ENCODE measurements at regions of chr11 and their contacts with region 1.

Region 1: GRCh38 chr11:59135648-59136461 is 6.8 kb upstream of the FAM111A start:
- DNase-seq: peak; percentile 40
- ATAC-seq: peak; percentile 100
- H3K4me3 ChIP-seq: no peak overlapping the region
- H3K27ac ChIP-seq: no peak overlapping the region
- H3K4me1 ChIP-seq: no peaks in the 10 kb centered on the region
- H3K27me3 ChIP-seq: no peaks in the 10 kb centered on the region
- CTCF ChIP-seq: peak; percentile 99 to 100 (median 100); a peak in 5 of 6 replicates
- EP300 ChIP-seq: no peak
- POLR2A ChIP-seq: no peak
- RAD21 ChIP-seq: peak; percentile 99

Region 2: GRCh38 chr11:58654079-58654907 is 481.6 kb before region 1 on chr11:
- CTCF ChIA-PET with region 1: interaction called, 6 read pairs
- POLR2A ChIA-PET with region 1: no interaction called
- RAD21 ChIA-PET with region 1: no interaction called
- SMC1A ChIA-PET with region 1: no interaction called
- in situ Hi-C with region 1: no loop called
- intact Hi-C with region 1: loop called (anchors 1 kb)
- DNase-seq: peak; percentile 38
- ATAC-seq: peak; percentile 98
- H3K4me3 ChIP-seq: no peak overlapping the region
- H3K27ac ChIP-seq: no peak overlapping the region
- H3K4me1 ChIP-seq: peaks cover 4% of the 10 kb centered on the region; the same call in 1 of the 2 replicates
- H3K27me3 ChIP-seq: no peaks in the 10 kb centered on the region
- CTCF ChIP-seq: peak; percentile 89 to 90 (median 89)
- EP300 ChIP-seq: no peak
- POLR2A ChIP-seq: no peak
- RAD21 ChIP-seq: peak; percentile 76

Region 3: GRCh38 chr11:58900479-58901420 is 235.1 kb before region 1 on chr11:
- CTCF ChIA-PET with region 1: no interaction called
- POLR2A ChIA-PET with region 1: no interaction called
- RAD21 ChIA-PET with region 1: interaction called, 5 read pairs
- SMC1A ChIA-PET with region 1: interaction called, 3 read pairs
- in situ Hi-C with region 1: no loop called
- intact Hi-C with region 1: loop called (anchors 5 kb)
- DNase-seq: peak; percentile 16
- ATAC-seq: peak; percentile 90
- H3K4me3 ChIP-seq: no peak overlapping the region
- H3K27ac ChIP-seq: no peak overlapping the region
- H3K4me1 ChIP-seq: no peaks in the 10 kb centered on the region
- H3K27me3 ChIP-seq: peaks cover 1 to 7% of the 10 kb centered on the region in 2 experiments
- CTCF ChIP-seq: peak; percentile 51 to 66 (median 62); a peak in 5 of 6 replicates
- EP300 ChIP-seq: no peak
- POLR2A ChIP-seq: no peak
- RAD21 ChIP-seq: peak; percentile 52; the same call in 1 of the 2 replicates

Region 4: GRCh38 chr11:58928691-58929090 is 207.2 kb before region 1 on chr11:
- CTCF ChIA-PET with region 1: no interaction called
- POLR2A ChIA-PET with region 1: no interaction called
- RAD21 ChIA-PET with region 1: no interaction called
- SMC1A ChIA-PET with region 1: no interaction called
- in situ Hi-C with region 1: no loop called
- intact Hi-C with region 1: no loop called
- DNase-seq: no peak
- ATAC-seq: no peak
- H3K4me3 ChIP-seq: no peak overlapping the region
- H3K27ac ChIP-seq: no peak overlapping the region
- H3K4me1 ChIP-seq: no peaks in the 10 kb centered on the region
- H3K27me3 ChIP-seq: peaks cover 1 to 6% of the 10 kb centered on the region in 2 experiments; a peak in 2 of 4 replicates
- CTCF ChIP-seq: no peak
- EP300 ChIP-seq: no peak
- POLR2A ChIP-seq: no peak
- RAD21 ChIP-seq: no peak

Region 5: GRCh38 chr11:59062602-59063529 is 73.0 kb before region 1 on chr11:
- CTCF ChIA-PET with region 1: interaction called, 30 read pairs
- POLR2A ChIA-PET with region 1: no interaction called
- RAD21 ChIA-PET with region 1: interaction called, 16 read pairs
- SMC1A ChIA-PET with region 1: interaction called, 14 read pairs
- in situ Hi-C with region 1: no loop called
- intact Hi-C with region 1: no loop called
- DNase-seq: no peak
- ATAC-seq: no peak
- H3K4me3 ChIP-seq: no peak overlapping the region
- H3K27ac ChIP-seq: no peak overlapping the region
- H3K4me1 ChIP-seq: peaks cover 6% of the 10 kb centered on the region
- H3K27me3 ChIP-seq: no peaks in the 10 kb centered on the region
- CTCF ChIP-seq: no peak
- EP300 ChIP-seq: no peak
- POLR2A ChIP-seq: no peak
- RAD21 ChIP-seq: no peak

Region 6: DNA sequence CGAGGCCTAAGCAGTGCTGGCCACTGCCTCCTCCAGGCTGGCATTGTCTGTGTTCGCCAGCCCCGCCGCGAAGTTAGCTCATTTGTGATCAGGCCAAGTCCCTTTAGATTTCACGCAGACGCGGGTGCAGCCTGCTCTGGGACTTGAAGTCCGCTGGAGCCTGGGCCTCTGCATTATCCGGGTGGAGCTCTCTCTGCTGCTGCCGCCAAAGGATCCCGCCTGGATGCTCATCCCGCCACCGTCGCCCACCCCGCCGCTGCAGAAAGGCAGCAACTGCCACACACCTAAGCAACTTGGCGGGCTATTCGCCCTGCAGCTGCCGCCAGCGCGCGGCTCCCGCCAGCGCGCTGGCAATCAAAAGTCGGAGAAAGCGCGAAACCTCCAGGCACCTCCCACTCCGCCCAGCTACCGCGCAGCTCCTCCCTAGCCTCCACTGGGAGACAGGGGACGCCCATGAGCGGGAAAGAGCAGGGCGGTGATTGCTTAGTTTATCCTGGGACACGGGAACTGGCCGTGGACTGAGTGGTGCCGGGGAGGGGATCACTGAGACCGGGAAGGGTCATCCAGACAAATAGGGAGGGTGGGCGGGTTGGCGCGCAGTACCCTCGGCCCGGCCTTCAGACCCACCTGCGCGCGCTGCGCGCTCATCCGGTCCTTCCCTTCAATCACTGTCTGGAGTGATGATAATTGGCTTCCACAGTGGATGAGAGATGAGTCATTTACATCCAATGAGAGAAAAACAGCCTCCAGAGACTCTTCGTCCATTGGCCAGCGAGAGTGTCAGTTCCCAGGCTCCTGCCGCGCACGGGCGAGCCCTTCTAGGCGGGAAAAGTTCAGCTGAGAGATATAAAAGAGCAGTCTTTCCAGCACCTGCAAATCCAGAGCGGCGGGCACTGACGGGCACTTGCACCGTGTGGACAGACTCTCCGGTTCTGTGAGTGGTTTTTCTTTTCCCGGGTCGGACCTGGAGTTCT is 29.2 kb before region 1 on chr11 and contains the start of gene FAM111B:
- CTCF ChIA-PET with region 1: interaction called, 49 read pairs
- POLR2A ChIA-PET with region 1: interaction called, 3 read pairs
- RAD21 ChIA-PET with region 1: interaction called, 33 read pairs
- SMC1A ChIA-PET with region 1: interaction called, 28 read pairs
- in situ Hi-C with region 1: loop called (anchors 5 kb)
- intact Hi-C with region 1: loop called (anchors 1 kb)
- DNase-seq: peak; percentile 84
- ATAC-seq: peak; percentile 85
- H3K4me3 ChIP-seq: peak within 1 kb of the TSS; percentile 79
- H3K27ac ChIP-seq: peak within 1 kb of the TSS; percentile 89
- H3K4me1 ChIP-seq: peaks cover 7% of the 10 kb centered on the region
- H3K27me3 ChIP-seq: no peaks in the 10 kb centered on the region
- CTCF ChIP-seq: no peak
- EP300 ChIP-seq: no peak
- POLR2A ChIP-seq: peak; percentile 79
- RAD21 ChIP-seq: no peak
- polyA plus RNA-seq, gene FAM111B: 42.0 to 65.3 TPM

Region 7: GRCh38 chr11:59152312-59152951 is 16.6 kb after region 1 on chr11:
- CTCF ChIA-PET with region 1: interaction called, 250 read pairs
- POLR2A ChIA-PET with region 1: interaction called, 3 read pairs
- RAD21 ChIA-PET with region 1: interaction called, 56 read pairs
- SMC1A ChIA-PET with region 1: interaction called, 27 read pairs
- in situ Hi-C with region 1: no loop called
- intact Hi-C with region 1: no loop called
- DNase-seq: no peak
- ATAC-seq: peak; percentile 91
- H3K4me3 ChIP-seq: peak overlapping the region; percentile 44; the same call in 1 of the 2 replicates
- H3K27ac ChIP-seq: peak overlapping the region; percentile 83
- H3K4me1 ChIP-seq: peaks cover 28% of the 10 kb centered on the region
- H3K27me3 ChIP-seq: no peaks in the 10 kb centered on the region
- CTCF ChIP-seq: no peak
- EP300 ChIP-seq: peak in 1 of 2 experiments; percentile 68; a peak in 1 of 4 replicates
- POLR2A ChIP-seq: 0 out of 2 replicates have a peak, but pooled peaks have one; percentile 6
- RAD21 ChIP-seq: no peak

Region 8: DNA sequence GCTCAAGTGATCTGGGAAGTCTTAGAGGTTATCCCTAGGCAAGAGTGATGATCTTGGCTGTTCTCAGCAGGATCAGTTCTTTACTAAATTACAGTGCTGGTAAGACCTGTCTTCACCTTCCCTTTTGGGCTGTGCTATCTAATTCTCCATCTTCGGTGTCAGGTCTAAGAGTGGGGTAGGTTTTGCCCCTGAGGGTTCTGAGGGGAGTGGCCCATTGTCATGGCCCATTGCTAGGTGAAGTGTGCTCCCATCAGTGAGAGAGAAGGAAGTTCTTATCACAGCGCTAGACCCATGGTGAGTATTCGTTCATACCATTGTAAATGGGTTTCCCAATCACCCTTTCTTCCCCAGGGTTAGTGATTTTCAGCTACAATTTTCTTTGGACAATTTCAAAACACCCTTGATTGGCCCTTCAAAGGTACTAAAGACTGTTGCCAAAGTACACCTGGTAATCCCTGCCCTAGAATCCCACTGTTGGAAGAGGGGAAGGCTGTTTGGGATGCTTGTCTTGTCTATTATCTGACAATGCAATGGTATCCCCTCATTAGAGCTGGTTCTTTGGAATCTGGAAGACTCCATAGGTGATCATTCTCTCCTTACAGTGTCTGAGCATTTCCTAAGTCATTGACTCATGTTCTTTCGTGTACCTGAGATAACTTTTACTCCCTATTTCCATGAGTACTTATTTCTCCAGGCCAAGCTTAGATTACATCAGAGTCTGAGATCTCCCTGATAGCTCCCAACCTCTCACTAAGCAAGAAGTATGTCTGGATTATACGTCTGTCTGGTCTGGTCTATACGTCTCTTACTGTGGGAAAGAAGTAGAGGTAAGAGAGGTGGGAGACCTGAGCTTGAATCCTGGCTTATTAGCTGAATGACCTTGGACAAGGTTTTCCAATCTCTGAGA is 56.7 kb after region 1 on chr11:
- CTCF ChIA-PET with region 1: no interaction called
- POLR2A ChIA-PET with region 1: no interaction called
- RAD21 ChIA-PET with region 1: no interaction called
- SMC1A ChIA-PET with region 1: no interaction called
- in situ Hi-C with region 1: no loop called
- intact Hi-C with region 1: no loop called
- DNase-seq: no peak
- ATAC-seq: no peak
- H3K4me3 ChIP-seq: no peak overlapping the region
- H3K27ac ChIP-seq: no peak overlapping the region
- H3K4me1 ChIP-seq: peaks cover 6% of the 10 kb centered on the region
- H3K27me3 ChIP-seq: no peaks in the 10 kb centered on the region
- CTCF ChIP-seq: no peak
- EP300 ChIP-seq: no peak
- POLR2A ChIP-seq: no peak
- RAD21 ChIP-seq: no peak

Region 9: DNA sequence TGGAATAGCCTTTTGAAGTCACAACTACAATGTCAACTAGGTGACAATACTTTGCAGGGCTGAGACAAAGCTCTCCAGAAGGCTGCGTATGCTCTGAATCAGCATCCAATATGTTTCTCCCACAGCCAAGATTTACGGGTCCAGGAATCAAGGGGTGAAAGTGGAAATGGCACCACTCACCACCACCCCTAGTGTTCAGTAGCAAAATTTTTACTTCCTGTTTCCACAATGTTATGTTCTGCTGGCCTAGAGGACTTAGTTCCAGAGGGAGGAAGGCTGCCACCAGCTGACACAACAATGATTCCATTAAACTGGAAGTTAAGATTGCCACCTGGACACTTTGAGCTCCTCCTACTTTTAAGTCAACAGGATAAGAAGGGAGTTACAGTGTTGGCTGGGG is 145.3 kb after region 1 on chr11:
- CTCF ChIA-PET with region 1: no interaction called
- POLR2A ChIA-PET with region 1: no interaction called
- RAD21 ChIA-PET with region 1: no interaction called
- SMC1A ChIA-PET with region 1: no interaction called
- in situ Hi-C with region 1: no loop called
- intact Hi-C with region 1: no loop called
- DNase-seq: no peak
- ATAC-seq: no peak
- H3K4me3 ChIP-seq: no peak overlapping the region
- H3K27ac ChIP-seq: no peak overlapping the region
- H3K4me1 ChIP-seq: peaks cover 16% of the 10 kb centered on the region
- H3K27me3 ChIP-seq: no peaks in the 10 kb centered on the region
- CTCF ChIP-seq: 0 out of 6 replicates have a peak, but pooled peaks of 2 of the 3 experiments have one; percentile 14 to 15
- EP300 ChIP-seq: no peak
- POLR2A ChIP-seq: no peak
- RAD21 ChIP-seq: no peak